ENCODE measurements at regions of chr1 and their contacts with region 1.

Region 1: GRCh38 chr1:117051224-117052064 is 8.7 kb upstream of the TTF2 start:
- DNase-seq: peak; percentile 22 to 36 (median 34)
- H3K4me3 ChIP-seq: peak overlapping the region; percentile 6 to 65 (median 31)
- H3K4me3 Mint-ChIP-seq: peak overlapping the region; percentile 74 to 91
- H3K27ac ChIP-seq: peak overlapping the region; percentile 3 to 87
- H3K27ac Mint-ChIP-seq: peak overlapping the region; percentile 68 to 94 (median 83)
- H3K4me1 ChIP-seq: peaks cover 44 to 46% of the 10 kb centered on the region in 2 donors
- H3K4me1 Mint-ChIP-seq: peaks cover 47% of the 10 kb centered on the region
- H3K27me3 ChIP-seq: no peaks in the 10 kb centered on the region
- H3K27me3 Mint-ChIP-seq: peaks cover 0 to 2% (median 0%) of the 10 kb centered on the region in 3 donors
- CTCF ChIP-seq: no peak

Region 2: GRCh38 chr1:116628448-116628847 is 423.0 kb before region 1 on chr1:
- intact Hi-C with region 1: no loop called
- DNase-seq: no peak
- H3K4me3 ChIP-seq: no peak overlapping the region
- H3K4me3 Mint-ChIP-seq: no peak overlapping the region
- H3K27ac ChIP-seq: no peak overlapping the region
- H3K27ac Mint-ChIP-seq: peak overlapping the region in 1 of 7 donors; percentile 45
- H3K4me1 ChIP-seq: peaks cover 0 to 6% of the 10 kb centered on the region in 2 donors
- H3K4me1 Mint-ChIP-seq: peaks cover 3% of the 10 kb centered on the region
- H3K27me3 ChIP-seq: no peaks in the 10 kb centered on the region
- H3K27me3 Mint-ChIP-seq: peaks cover 1 to 8% (median 5%) of the 10 kb centered on the region in 3 donors
- CTCF ChIP-seq: no peak

Region 3: GRCh38 chr1:116919802-116920201 is 131.6 kb before region 1 on chr1:
- intact Hi-C with region 1: no loop called
- DNase-seq: no peak
- H3K4me3 ChIP-seq: no peak overlapping the region
- H3K4me3 Mint-ChIP-seq: no peak overlapping the region
- H3K27ac ChIP-seq: no peak overlapping the region
- H3K27ac Mint-ChIP-seq: no peak overlapping the region
- H3K4me1 ChIP-seq: no peaks in the 10 kb centered on the region
- H3K4me1 Mint-ChIP-seq: no peaks in the 10 kb centered on the region
- H3K27me3 ChIP-seq: no peaks in the 10 kb centered on the region
- H3K27me3 Mint-ChIP-seq: peaks cover 0 to 9% (median 5%) of the 10 kb centered on the region in 3 donors
- CTCF ChIP-seq: no peak

Region 4: GRCh38 chr1:117001254-117001927 is 50.1 kb before region 1 on chr1 and contains the start of gene CD101:
- intact Hi-C with region 1: loop called in 1 of 2 experiments (anchors 5 kb)
- DNase-seq: peak; percentile 76 to 89 (median 80)
- H3K4me3 ChIP-seq: peak within 1 kb of the TSS; percentile 31 to 75 (median 40)
- H3K4me3 Mint-ChIP-seq: peak within 1 kb of the TSS; percentile 39 to 87
- H3K27ac ChIP-seq: peak within 1 kb of the TSS; percentile 57 to 92
- H3K27ac Mint-ChIP-seq: peak within 1 kb of the TSS; percentile 91 to 99 (median 94)
- H3K4me1 ChIP-seq: peaks cover 65 to 91% of the 10 kb centered on the region in 2 donors
- H3K4me1 Mint-ChIP-seq: peaks cover 82% of the 10 kb centered on the region
- H3K27me3 ChIP-seq: no peaks in the 10 kb centered on the region
- H3K27me3 Mint-ChIP-seq: peaks cover 0 to 7% (median 2%) of the 10 kb centered on the region in 3 donors
- CTCF ChIP-seq: no peak
- polyA plus RNA-seq, gene CD101: 27.2 to 101 (median 54.7) TPM

Measured in CD14-positive monocyte (primary cell).